H1 (cell line): ENCODE measurements at regions of chr1 and their contacts with region 1.

Region 1: DNA sequence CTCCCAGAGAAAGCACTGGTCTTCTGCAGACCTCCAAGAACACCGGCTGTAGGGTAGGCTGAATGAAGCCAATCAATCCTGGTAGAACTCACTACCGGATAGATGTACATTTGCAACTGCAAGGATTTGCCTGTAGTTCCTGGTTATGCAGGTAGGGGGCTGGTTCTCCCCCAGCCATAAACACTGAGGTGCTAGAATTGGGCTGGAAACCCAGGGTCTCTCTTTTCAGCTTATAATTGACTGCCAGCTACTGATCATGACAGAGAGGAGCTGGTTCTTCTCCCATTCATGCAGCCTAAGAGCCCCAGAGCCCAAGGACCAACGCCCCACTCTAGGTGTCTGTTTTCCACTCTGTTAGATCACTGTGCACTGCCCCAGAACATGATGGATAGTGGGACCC is 21.5 kb upstream of the MTARC2 start:
- DNase-seq: no peak
- H3K4me3 ChIP-seq: no peak overlapping the region
- H3K27ac ChIP-seq: no peak overlapping the region
- H3K4me1 ChIP-seq: no peaks in the 10 kb centered on the region
- H3K27me3 ChIP-seq: no peaks in the 10 kb centered on the region
- CTCF ChIP-seq: peak; percentile 31 to 62 (median 33)
- EP300 ChIP-seq: no peak
- POLR2A ChIP-seq: no peak
- RAD21 ChIP-seq: peak in 1 of 2 experiments; percentile 35; a peak in 2 of 4 replicates

Region 2: DNA sequence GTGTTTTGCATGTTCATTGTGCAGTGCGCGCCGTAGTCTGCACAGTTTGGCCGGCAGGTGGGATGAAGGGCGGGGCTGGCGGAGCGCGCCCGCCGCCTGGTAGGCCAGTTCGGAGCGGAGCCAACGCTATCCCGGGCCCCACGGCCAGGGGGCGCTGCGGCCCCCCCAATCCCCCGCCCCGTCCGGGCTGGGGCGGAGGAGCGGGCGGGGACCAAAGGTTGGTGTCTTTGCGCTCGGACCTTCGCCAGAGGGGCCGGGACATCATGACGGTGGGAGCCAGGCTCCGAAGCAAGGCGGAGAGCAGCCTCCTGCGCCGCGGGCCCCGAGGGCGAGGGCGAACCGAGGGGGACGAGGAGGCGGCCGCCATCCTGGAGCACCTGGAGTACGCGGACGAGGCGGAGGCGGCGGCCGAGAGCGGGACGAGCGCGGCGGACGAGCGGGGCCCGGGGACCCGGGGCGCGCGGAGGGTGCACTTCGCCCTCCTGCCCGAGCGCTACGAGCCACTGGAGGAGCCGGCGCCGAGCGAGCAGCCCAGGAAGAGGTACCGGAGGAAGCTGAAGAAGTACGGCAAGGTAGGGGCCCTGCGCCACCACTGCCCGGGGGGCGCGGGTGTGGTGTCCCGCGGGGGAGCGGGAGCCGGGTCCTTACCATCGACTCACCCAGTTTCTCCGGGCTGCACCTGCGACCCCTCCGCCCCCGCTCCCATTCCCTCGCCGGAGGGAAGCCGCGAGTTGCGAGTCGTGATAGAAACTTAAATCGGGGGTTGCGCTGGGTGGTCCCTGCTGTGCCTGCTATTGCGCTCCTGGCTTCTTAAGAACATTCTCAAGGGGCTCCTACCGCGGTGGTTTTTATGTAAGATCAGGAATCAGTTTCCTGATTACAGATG is 36.3 kb before region 1 on chr1 and contains the start of gene C1orf115:
- CTCF ChIA-PET with region 1: interaction called, 36 read pairs
- POLR2A ChIA-PET with region 1: no interaction called
- DNase-seq: peak; percentile 44 to 96
- H3K4me3 ChIP-seq: peak within 1 kb of the TSS; percentile 46 to 73 (median 57)
- H3K27ac ChIP-seq: no peak within 1 kb of the TSS
- H3K4me1 ChIP-seq: peaks cover 0 to 3% (median 1%) of the 10 kb centered on the region in 4 experiments; a peak in 3 of 7 replicates
- H3K27me3 ChIP-seq: peaks cover 0 to 22% (median 14%) of the 10 kb centered on the region in 4 experiments; a peak in 6 of 7 replicates
- CTCF ChIP-seq: peak; percentile 88 to 95 (median 91)
- EP300 ChIP-seq: no peak
- POLR2A ChIP-seq: peak in 1 of 2 experiments; percentile 58; a peak in 2 of 3 replicates
- RAD21 ChIP-seq: peak; percentile 62 to 71
- total RNA-seq, gene C1orf115: 5.6 and 6.4 TPM in 2 replicates

Region 3: DNA sequence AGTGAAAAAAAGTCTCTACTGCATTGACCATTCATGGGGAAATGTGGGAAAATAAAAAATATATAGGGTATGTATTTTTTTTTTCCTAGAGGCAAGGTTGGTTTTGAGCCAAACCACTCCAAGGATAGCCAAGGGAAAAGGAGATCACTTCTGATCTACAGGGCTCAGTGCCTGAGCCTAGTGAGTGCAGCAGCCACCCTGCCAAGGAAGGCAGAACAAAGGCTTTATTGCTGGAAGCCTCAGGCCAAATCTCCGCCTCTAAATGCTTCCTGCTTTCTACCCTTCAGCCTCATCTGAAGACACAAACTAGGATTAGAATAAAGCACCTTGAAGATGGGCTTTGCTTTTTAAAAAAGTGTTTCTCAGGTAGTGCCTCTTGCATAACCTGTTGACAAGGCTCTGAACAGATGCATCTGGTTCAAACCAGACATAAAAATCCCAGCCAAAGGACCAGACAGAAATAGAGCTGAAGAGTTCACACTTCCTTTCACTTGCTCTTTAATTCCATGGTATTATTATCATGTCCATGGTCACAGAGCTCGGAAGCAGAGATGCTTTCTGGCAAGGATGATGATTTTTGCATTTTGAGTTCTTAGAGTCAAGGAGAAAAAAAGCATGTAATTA is 26.0 kb before region 1 on chr1:
- CTCF ChIA-PET with region 1: interaction called, 26 read pairs
- POLR2A ChIA-PET with region 1: no interaction called
- DNase-seq: no peak
- H3K4me3 ChIP-seq: no peak overlapping the region
- H3K27ac ChIP-seq: no peak overlapping the region
- H3K4me1 ChIP-seq: peaks cover 0 to 8% (median 3%) of the 10 kb centered on the region in 4 experiments; a peak in 4 of 7 replicates
- H3K27me3 ChIP-seq: no peaks in the 10 kb centered on the region
- CTCF ChIP-seq: no peak
- EP300 ChIP-seq: no peak
- POLR2A ChIP-seq: no peak
- RAD21 ChIP-seq: no peak

Region 4: GRCh38 chr1:220748089-220748934 is 21.7 kb after region 1 on chr1 and contains the start of gene MTARC2:
- CTCF ChIA-PET with region 1: interaction called, 20 read pairs
- POLR2A ChIA-PET with region 1: no interaction called
- DNase-seq: peak; percentile 57 to 81
- H3K4me3 ChIP-seq: peak within 1 kb of the TSS; percentile 71 to 76 (median 74)
- H3K27ac ChIP-seq: peak within 1 kb of the TSS; percentile 44; the same call in 1 of the 2 replicates
- H3K4me1 ChIP-seq: peaks cover 3 to 9% (median 7%) of the 10 kb centered on the region in 4 experiments; a peak in 5 of 7 replicates
- H3K27me3 ChIP-seq: peaks cover 0 to 28% (median 15%) of the 10 kb centered on the region in 4 experiments; a peak in 6 of 7 replicates
- CTCF ChIP-seq: no peak
- EP300 ChIP-seq: no peak
- POLR2A ChIP-seq: peak; percentile 79 to 92
- RAD21 ChIP-seq: no peak
- total RNA-seq, gene MTARC2: 6.9 and 7.2 TPM in 2 replicates

Region 5: DNA sequence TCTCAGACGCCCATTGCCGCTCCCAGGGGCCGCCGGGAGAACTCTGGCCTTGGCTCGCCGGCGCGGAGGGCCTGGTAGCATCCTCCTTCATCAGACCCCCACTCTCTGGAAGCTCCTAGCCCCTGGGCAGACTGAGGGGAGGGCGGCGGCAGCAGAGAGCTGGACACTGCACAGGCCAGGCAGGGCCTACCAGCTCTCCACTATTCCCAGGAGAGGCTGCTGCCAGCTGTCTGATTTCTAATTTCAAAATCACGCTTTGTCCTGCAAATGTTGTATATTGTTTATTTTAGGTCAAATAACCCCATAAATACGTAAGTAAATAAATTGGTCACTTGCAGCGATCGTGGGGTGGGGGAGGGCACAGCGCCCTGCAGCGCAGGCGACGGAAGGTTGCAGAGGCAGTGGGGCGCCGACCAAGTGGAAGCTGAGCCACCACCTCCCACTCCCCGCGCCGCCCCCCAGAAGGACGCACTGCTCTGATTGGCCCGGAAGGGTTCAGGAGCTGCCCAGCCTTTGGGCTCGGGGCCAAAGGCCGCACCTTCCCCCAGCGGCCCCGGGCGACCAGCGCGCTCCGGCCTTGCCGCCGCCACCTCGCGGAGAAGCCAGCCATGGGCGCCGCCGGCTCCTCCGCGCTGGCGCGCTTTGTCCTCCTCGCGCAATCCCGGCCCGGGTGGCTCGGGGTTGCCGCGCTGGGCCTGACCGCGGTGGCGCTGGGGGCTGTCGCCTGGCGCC is 59.9 kb after region 1 on chr1 and contains the start of gene MTARC1:
- CTCF ChIA-PET with region 1: interaction called, 14 read pairs
- POLR2A ChIA-PET with region 1: no interaction called
- DNase-seq: peak in 1 of 2 experiments; percentile 81
- H3K4me3 ChIP-seq: peak within 1 kb of the TSS; percentile 59 to 84 (median 69)
- H3K27ac ChIP-seq: peak within 1 kb of the TSS; percentile 63; the same call in 1 of the 2 replicates
- H3K4me1 ChIP-seq: peaks cover 4 to 14% (median 11%) of the 10 kb centered on the region in 4 experiments
- H3K27me3 ChIP-seq: no peaks in the 10 kb centered on the region
- CTCF ChIP-seq: peak in 2 of 3 experiments; percentile 12 to 27; a peak in 2 of 4 replicates
- EP300 ChIP-seq: no peak
- POLR2A ChIP-seq: peak in 1 of 2 experiments; percentile 59; a peak in 2 of 3 replicates
- RAD21 ChIP-seq: peak; percentile 5 to 7; a peak in 1 of 4 replicates
- total RNA-seq, gene MTARC1: 42.4 and 46.2 TPM in 2 replicates